ENCODE measurements at regions of chr14 and their contacts with region 1.

Region 1: GRCh38 chr14:105203057-105203531 is 22.0 kb upstream of the NUDT14 start:
- DNase-seq: peak; percentile 49
- H3K4me3 Mint-ChIP-seq: no peak overlapping the region
- H3K27ac Mint-ChIP-seq: no peak overlapping the region
- H3K4me1 Mint-ChIP-seq: peaks cover 6% of the 10 kb centered on the region
- H3K27me3 Mint-ChIP-seq: peaks cover 6% of the 10 kb centered on the region

Region 2: DNA sequence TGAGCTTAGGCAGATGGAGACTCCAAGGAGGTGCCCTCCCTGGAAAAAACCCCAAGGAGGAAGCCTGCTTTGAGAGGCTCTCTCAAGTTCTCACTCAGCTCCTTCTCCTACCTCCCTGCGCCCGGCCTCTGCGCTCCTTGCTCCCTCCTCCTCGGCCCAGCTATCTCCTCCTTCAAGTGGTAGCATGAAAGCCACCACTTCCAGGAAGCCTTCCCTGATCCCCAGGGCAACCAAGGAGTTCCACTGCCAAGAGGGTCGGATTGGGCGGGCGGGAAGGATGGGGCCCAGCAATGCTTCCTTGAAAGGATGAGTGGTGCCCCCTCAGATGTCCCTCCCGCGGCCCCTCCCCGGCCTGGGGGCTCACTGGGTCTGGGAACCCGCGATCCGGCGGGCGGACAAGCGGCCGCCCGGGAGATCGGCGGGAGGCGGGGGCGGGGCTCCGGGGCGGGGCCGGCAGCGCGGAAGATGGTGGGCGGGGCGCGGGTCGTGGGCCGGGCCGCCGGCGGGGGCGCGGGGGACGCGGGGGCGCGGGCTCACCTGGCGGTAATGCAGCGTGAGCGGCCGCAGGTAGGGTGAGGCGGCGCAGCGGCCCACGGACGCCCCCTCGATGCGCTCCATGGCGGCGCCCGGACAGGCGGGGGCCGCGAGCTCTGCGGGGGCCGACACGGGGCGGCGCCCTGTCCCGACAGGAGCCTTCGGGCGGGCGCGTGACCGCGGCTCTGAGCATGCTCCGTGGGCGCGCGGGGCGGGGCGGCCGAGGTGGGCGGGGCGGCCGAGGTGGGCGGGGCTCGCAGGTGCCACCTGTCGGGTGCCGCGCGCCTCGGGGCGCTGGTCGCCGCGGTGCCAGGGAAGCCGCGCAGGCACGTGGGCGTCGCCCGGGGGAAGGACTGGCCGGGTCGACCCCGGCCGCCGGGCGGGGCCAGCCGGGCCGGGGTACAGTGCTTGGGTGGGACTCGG is 22.2 kb before region 1 on chr14 and contains the start of gene NUDT14:
- intact Hi-C with region 1: loop called (anchors 2 kb)
- DNase-seq: peak; percentile 69
- H3K4me3 Mint-ChIP-seq: peak within 1 kb of the TSS; percentile 68
- H3K27ac Mint-ChIP-seq: no peak within 1 kb of the TSS
- H3K4me1 Mint-ChIP-seq: no peaks in the 10 kb centered on the region
- H3K27me3 Mint-ChIP-seq: peaks cover 4% of the 10 kb centered on the region
- total RNA-seq, gene NUDT14: 7.7 and 10.4 TPM in 2 replicates

Region 3: GRCh38 chr14:105223260-105223659 is 20.2 kb after region 1 on chr14:
- intact Hi-C with region 1: no loop called
- DNase-seq: no peak
- H3K4me3 Mint-ChIP-seq: no peak overlapping the region
- H3K27ac Mint-ChIP-seq: no peak overlapping the region
- H3K4me1 Mint-ChIP-seq: no peaks in the 10 kb centered on the region
- H3K27me3 Mint-ChIP-seq: no peaks in the 10 kb centered on the region